ENCODE measurements at regions of chr9 and their contacts with region 1.

Region 1: GRCh38 chr9:5364294-5365024 is 24.8 kb upstream of the RLN1 start:
- DNase-seq: no peak
- ATAC-seq: peak; percentile 97
- H3K4me3 Mint-ChIP-seq: no peak overlapping the region
- H3K27ac Mint-ChIP-seq: peak overlapping the region; percentile 44
- H3K4me1 Mint-ChIP-seq: peaks cover 17% of the 10 kb centered on the region
- H3K27me3 Mint-ChIP-seq: no peaks in the 10 kb centered on the region

Region 2: GRCh38 chr9:5326893-5327548 is 37.4 kb before region 1 on chr9:
- CTCF ChIA-PET with region 1: no interaction called
- POLR2A ChIA-PET with region 1: no interaction called
- intact Hi-C with region 1: no loop called
- DNase-seq: peak; percentile 16
- ATAC-seq: no peak
- H3K4me3 Mint-ChIP-seq: no peak overlapping the region
- H3K27ac Mint-ChIP-seq: no peak overlapping the region
- H3K4me1 Mint-ChIP-seq: peaks cover 12% of the 10 kb centered on the region
- H3K27me3 Mint-ChIP-seq: no peaks in the 10 kb centered on the region

Region 3: DNA sequence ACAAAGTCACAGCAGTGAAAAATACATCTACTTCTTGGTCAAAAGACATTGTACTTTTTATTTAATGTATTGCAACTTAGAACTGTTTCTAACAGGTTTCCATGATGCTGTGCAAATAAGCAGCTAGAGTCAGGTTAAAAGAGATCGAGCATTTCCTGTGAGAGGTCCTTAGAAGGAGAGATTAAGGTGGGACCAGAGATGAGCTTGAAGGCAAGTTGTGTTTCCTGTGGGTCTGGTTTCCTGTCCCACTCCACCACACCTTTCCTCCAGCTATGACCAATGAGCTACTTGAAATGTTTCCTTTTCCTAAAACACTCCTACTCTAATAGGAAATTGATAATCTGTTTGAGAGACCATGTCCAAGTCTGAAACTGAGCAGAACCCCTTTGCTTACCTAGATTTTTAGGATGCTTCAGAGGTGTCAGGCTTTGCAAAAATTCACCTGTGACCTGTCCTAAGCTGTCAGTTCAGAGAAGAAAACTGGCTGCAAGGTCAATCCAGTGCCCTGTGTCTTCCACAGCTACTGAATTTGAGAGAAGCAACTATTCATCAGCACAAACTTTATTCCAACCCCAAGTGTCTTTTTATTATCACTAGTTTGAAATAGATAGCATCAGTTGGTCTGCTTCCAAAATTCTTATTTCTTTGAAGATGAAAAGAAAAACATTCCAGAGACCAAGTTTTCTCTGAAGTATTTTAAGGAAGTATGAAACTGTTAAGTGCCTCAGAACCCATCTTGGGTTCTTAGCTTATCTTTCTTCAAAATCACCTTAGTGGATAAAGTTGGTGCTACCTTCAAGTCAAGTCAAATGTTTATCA is 11.6 kb before region 1 on chr9:
- CTCF ChIA-PET with region 1: interaction called, 19 read pairs
- POLR2A ChIA-PET with region 1: no interaction called
- intact Hi-C with region 1: no loop called
- DNase-seq: no peak
- ATAC-seq: peak; percentile 72
- H3K4me3 Mint-ChIP-seq: no peak overlapping the region
- H3K27ac Mint-ChIP-seq: peak overlapping the region; percentile 52
- H3K4me1 Mint-ChIP-seq: peaks cover 36% of the 10 kb centered on the region
- H3K27me3 Mint-ChIP-seq: no peaks in the 10 kb centered on the region

Region 4: DNA sequence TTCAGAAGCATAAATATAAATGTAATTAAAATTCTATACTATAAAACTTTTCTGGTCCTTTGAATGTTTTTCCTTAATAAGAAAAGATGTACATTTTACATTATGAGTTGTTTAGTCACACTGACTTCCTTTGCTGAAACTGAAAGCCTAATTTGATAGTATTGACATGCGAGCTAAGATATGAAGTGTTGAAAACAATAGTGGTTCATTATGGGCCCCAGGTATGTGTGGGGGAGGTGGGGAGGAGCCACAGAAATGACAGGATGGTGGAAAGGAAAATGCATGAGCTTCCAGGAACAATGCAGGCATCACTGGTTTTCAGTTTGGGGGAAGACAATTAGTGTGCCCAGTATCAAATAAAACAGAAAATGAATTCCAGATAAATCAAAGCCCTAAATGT is 10.6 kb after region 1 on chr9:
- CTCF ChIA-PET with region 1: no interaction called
- POLR2A ChIA-PET with region 1: no interaction called
- intact Hi-C with region 1: loop called in 1 of 2 experiments (anchors 1 kb)
- DNase-seq: peak; percentile 69
- ATAC-seq: peak; percentile 90
- H3K4me3 Mint-ChIP-seq: no peak overlapping the region
- H3K27ac Mint-ChIP-seq: peak overlapping the region; percentile 40
- H3K4me1 Mint-ChIP-seq: peaks cover 33% of the 10 kb centered on the region
- H3K27me3 Mint-ChIP-seq: no peaks in the 10 kb centered on the region